ENCODE measurements at regions of chr7 and their contacts with region 1.

Region 1: GRCh38 chr7:56063882-56064625 is at the start of gene SUMF2:
- H3K4me3 Mint-ChIP-seq: peak within 1 kb of the TSS; percentile 90
- H3K27ac Mint-ChIP-seq: peak within 1 kb of the TSS; percentile 93
- H3K4me1 Mint-ChIP-seq: peaks cover 23% of the 10 kb centered on the region
- H3K27me3 Mint-ChIP-seq: no peaks in the 10 kb centered on the region

Region 2: DNA sequence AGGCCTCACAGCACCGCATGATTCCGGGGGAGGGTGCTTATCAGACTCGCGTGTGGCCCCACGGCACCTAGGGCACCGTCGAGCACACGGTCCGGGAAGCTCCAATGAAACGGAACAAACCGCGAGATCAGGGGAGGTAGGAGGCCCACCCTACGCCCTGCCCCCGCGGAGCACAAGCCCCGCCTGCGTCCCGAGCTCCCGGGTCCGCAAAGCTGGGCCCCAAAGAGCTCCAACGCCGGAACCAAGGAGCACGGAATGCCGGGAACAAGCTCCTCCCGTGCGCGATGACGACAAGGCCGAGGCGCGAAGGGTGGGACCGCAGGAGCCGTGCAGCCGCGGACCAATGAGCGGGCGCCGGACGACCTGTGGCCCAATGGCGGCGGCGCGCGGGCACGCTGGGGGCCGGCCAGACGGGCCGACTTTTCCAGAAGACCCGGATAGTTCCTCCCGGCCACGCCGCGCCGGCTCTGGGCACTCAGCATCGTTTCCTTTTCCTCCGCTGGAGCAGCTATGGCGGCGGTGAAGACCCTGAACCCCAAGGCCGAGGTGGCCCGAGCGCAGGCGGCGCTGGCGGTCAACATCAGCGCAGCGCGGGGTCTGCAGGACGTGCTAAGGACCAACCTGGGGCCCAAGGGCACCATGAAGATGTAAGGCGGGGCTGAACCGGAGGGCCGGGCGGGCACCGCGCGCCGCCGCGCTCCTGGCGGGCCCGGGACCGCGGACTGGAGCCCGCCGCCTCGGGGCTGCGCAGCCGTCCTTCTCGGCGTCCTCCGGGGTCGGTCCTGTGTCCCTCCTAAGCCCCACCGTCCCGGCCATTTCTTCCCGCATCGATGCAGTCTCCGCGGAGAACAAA is 12.5 kb before region 1 on chr7 and contains the starts of genes CCT6A and PSPH:
- intact Hi-C with region 1: loop called (anchors 1 kb)
- H3K4me3 Mint-ChIP-seq: peak within 1 kb of the TSS; percentile 97
- H3K27ac Mint-ChIP-seq: peak within 1 kb of the TSS; percentile 94
- H3K4me1 Mint-ChIP-seq: peaks cover 6% of the 10 kb centered on the region
- H3K27me3 Mint-ChIP-seq: no peaks in the 10 kb centered on the region

Region 3: GRCh38 chr7:56106108-56107073 is 42.3 kb after region 1 on chr7 and contains the start of gene CHCHD2:
- intact Hi-C with region 1: loop called (anchors 2 kb)
- H3K4me3 Mint-ChIP-seq: peak within 1 kb of the TSS; percentile 98
- H3K27ac Mint-ChIP-seq: peak within 1 kb of the TSS; percentile 97
- H3K4me1 Mint-ChIP-seq: peaks cover 27% of the 10 kb centered on the region
- H3K27me3 Mint-ChIP-seq: peaks cover 10% of the 10 kb centered on the region